Posterior cingulate gyrus (tissue), 11 donors: ENCODE measurements at regions of chr9 and their contacts with region 1.

Region 1: DNA sequence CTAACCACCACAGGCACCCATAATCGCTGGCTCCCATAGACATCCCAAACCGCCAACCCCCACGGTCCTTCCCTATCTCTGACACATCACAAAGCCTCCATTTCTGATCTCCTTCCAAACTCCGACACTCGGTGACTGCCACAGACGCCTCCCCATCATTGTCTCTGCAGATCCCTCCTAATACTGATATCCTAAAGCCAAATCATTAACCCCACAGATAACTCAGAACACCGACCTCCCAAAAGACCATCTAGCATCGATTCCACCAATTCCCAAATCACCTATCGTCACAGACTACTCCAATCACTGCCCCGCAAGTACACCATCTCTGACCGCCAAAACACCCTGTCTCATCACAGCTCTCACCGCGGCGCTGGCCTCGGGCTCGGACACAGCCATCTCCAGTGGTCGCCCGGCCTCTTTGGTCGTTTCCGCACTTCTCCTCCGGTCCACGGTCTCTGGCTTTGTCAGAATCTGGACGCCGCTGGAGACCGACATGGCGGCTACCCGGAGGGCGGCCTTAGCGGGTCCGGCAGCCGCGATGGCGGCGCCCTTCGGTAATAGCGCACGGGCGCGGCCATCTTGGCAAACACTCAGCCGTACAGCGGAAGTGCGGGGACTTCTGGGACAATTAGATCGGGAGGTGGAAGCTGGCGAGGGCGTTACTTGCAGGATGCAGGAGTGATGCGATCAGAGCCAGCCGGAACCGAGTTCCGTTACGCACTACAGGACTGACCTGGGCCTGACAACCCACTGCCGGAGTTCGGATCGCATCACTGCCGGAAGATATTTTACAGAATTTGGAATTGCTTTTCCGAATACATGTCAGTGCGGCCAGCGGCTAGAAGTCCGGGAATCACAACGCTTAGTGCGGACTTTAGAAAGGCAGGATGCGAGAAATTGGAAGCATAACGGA is at the start of gene ZFP37:
- DNase-seq: peak; percentile 88 to 99 (median 95)

Region 2: GRCh38 chr9:112905084-112905483 is 151.4 kb before region 1 on chr9:
- intact Hi-C with region 1: no loop called
- DNase-seq: no peak

Region 3: GRCh38 chr9:112997236-112997941 is 59.1 kb before region 1 on chr9:
- intact Hi-C with region 1: no loop called
- DNase-seq: no peak

Region 4: GRCh38 chr9:113011911-113012381 is 44.5 kb before region 1 on chr9 and contains the start of gene ZNF883:
- intact Hi-C with region 1: loop called (anchors 1 kb)
- DNase-seq: peak; percentile 55 to 95 (median 70)

Region 5: GRCh38 chr9:113247640-113248039 is 191.2 kb after region 1 on chr9:
- intact Hi-C with region 1: no loop called
- DNase-seq: no peak

Region 6: GRCh38 chr9:113410207-113410864 is 353.9 kb after region 1 on chr9 and contains the starts of genes C9orf43 and POLE3:
- intact Hi-C with region 1: loop called (anchors 10 kb)
- DNase-seq: peak; percentile 88 to 99 (median 92)